Spleen (tissue), 13 donors: ENCODE measurements at regions of chr14 and their contacts with region 1.

Region 1: DNA sequence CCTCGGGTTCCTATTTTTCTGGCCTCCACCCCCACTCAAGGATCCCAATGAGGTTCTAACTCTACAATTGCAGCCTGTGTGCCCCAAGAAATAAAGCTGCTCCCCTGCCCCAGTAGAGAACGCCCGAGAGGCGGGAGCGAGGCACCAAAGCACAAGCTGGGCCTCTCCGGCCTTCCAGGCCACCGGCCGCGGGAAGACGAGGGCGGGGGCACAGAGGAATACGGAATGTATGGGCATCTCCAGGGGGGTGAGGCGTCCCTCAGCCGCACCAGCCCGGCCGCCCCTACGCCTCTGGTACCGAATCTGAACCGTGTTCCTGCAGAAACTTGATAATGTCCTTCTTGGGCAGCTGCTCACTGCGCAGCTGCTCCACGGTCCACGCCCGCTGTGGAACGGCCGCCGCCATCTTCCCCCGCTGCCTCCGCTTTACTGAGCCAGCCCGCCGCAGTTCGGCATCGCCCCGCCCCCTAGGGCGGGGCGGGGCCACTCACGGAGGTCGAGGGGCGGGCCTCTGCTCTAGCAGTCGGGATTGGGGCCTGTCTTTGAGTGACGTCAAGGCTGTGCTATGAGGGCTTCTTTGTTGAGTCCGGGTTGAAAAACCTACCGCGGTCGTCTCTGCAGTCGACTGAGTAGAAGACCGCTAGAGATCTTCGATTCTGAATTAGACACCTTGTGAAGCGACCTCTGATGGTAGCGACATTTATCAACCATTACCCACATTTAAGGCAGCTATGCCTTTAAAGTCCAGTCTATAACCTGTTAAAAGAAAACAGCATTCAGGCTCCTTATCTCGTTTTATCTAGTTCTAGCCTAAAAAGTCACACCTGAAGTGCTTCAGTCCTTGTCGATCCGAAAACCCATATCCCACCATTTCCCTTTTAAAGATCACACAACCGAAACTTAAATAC is at the start of gene FKBP3:
- DNase-seq: peak; percentile 98
- H3K4me3 ChIP-seq: peak within 1 kb of the TSS; percentile 51 to 98 (median 92)
- H3K27ac ChIP-seq: peak within 1 kb of the TSS; percentile 89 to 94 (median 92)
- H3K4me1 ChIP-seq: peaks cover 24 to 78% (median 47%) of the 10 kb centered on the region in 6 donors
- H3K27me3 ChIP-seq: no peaks in the 10 kb centered on the region
- CTCF ChIP-seq: peak in 6 of 11 experiments; percentile 0 to 33 (median 18)
- POLR2A ChIP-seq: peak in 2 of 3 donors; percentile 74 to 82
- total RNA-seq, gene FKBP3: 27.9 to 48.4 (median 36.0) TPM

Region 2: GRCh38 chr14:45028107-45028626 is 106.1 kb before region 1 on chr14:
- intact Hi-C with region 1: no loop called
- DNase-seq: no peak
- H3K4me3 ChIP-seq: no peak overlapping the region
- H3K27ac ChIP-seq: no peak overlapping the region
- H3K4me1 ChIP-seq: no peaks in the 10 kb centered on the region
- H3K27me3 ChIP-seq: no peaks in the 10 kb centered on the region
- CTCF ChIP-seq: no peak
- POLR2A ChIP-seq: no peak

Region 3: GRCh38 chr14:45253068-45253753 is 118.9 kb after region 1 on chr14 and contains the start of gene MIS18BP1:
- intact Hi-C with region 1: loop called (anchors 5 kb)
- DNase-seq: peak; percentile 99
- H3K4me3 ChIP-seq: peak within 1 kb of the TSS; percentile 64 to 89 (median 79)
- H3K27ac ChIP-seq: peak within 1 kb of the TSS; percentile 87 to 95 (median 93)
- H3K4me1 ChIP-seq: peaks cover 3 to 58% (median 50%) of the 10 kb centered on the region in 6 donors
- H3K27me3 ChIP-seq: no peaks in the 10 kb centered on the region
- CTCF ChIP-seq: peak; percentile 75 to 96 (median 87)
- POLR2A ChIP-seq: peak; percentile 26 to 84 (median 54)
- total RNA-seq, gene MIS18BP1: 34.2 to 86.3 (median 48.4) TPM

Region 4: GRCh38 chr14:45308745-45309397 is 174.6 kb after region 1 on chr14:
- intact Hi-C with region 1: no loop called
- DNase-seq: no peak
- H3K4me3 ChIP-seq: no peak overlapping the region
- H3K27ac ChIP-seq: no peak overlapping the region
- H3K4me1 ChIP-seq: no peaks in the 10 kb centered on the region
- H3K27me3 ChIP-seq: no peaks in the 10 kb centered on the region
- CTCF ChIP-seq: no peak
- POLR2A ChIP-seq: no peak